Left ventricle myocardium inferior (tissue), 1 donor: ENCODE measurements at regions of chr9 and their contacts with region 1.

Region 1: GRCh38 chr9:5886114-5886939 is 4.4 kb upstream of the MLANA start:
- DNase-seq: peak; percentile 62
- H3K4me3 ChIP-seq: no peak overlapping the region
- H3K27ac ChIP-seq: no peak overlapping the region
- H3K4me1 ChIP-seq: no peaks in the 10 kb centered on the region
- H3K27me3 ChIP-seq: no peaks in the 10 kb centered on the region
- CTCF ChIP-seq: peak; percentile 91

Region 2: DNA sequence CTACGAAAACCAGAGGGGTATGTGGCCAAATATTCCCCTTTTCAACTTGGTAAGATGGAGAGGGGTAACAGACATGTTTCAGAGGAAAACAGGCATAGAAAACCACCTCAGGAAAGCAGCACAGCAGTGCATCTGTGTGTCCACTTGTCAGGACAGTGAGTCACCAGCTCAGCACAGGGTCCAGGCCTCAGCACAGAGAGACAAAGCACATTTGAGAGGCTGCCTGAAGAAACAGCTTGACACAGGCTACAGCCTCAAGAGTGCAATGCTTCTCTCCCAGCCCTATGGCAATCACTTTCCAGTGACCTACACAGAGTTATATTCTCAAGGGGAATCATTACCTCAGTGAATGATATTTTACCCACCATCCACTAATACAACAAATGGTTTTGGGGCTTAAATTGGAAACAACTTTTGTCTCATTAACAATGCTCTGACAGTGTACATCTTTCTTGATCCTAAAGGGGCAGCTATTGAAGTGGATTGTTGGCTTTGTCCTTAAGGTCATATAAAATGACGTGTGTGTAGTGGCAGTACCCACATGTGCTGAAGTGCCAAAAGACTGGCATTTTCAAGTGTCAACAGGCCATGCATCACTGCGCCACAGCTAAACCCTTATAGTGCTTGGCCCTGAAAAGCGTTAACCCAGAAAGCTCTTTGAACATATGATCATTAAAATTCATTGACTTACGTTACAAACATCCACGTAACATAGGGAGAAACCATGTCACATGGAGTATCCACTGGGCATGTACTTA is 99.8 kb before region 1 on chr9:
- intact Hi-C with region 1: no loop called
- DNase-seq: no peak
- H3K4me3 ChIP-seq: no peak overlapping the region
- H3K27ac ChIP-seq: no peak overlapping the region
- H3K4me1 ChIP-seq: peaks cover 37% of the 10 kb centered on the region
- H3K27me3 ChIP-seq: no peaks in the 10 kb centered on the region
- CTCF ChIP-seq: no peak

Region 3: DNA sequence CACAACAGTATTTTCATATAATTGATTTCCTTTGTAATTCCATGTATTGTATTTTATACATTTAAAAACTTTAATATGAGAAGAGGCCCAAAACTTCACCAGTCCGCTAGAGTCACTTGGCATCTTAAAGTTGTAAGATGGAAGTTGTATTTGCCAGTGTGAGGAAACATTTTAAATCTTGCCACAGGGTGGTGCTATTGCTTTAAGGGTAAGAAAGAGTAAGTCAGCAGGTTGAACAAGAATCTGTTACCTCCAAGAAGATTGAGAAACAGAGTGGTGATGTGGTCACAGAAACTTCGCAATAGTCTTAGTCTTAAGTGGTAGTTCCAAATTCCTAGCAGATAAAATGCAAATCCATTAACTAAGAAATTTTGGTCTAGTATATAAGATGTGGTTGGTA is 168.9 kb after region 1 on chr9:
- intact Hi-C with region 1: loop called (anchors 2 kb)
- DNase-seq: no peak
- H3K4me3 ChIP-seq: no peak overlapping the region
- H3K27ac ChIP-seq: no peak overlapping the region
- H3K4me1 ChIP-seq: no peaks in the 10 kb centered on the region
- H3K27me3 ChIP-seq: no peaks in the 10 kb centered on the region
- CTCF ChIP-seq: peak; percentile 63